ENCODE measurements at regions of chr15 and their contacts with region 1.

Region 1: GRCh38 chr15:65862682-65863081 is 6.6 kb upstream of the RAB11A start:
- DNase-seq: peak; percentile 62
- H3K4me3 Mint-ChIP-seq: no peak overlapping the region
- H3K27ac Mint-ChIP-seq: no peak overlapping the region
- H3K4me1 Mint-ChIP-seq: peaks cover 7% of the 10 kb centered on the region
- H3K27me3 Mint-ChIP-seq: peaks cover 3% of the 10 kb centered on the region

Region 2: DNA sequence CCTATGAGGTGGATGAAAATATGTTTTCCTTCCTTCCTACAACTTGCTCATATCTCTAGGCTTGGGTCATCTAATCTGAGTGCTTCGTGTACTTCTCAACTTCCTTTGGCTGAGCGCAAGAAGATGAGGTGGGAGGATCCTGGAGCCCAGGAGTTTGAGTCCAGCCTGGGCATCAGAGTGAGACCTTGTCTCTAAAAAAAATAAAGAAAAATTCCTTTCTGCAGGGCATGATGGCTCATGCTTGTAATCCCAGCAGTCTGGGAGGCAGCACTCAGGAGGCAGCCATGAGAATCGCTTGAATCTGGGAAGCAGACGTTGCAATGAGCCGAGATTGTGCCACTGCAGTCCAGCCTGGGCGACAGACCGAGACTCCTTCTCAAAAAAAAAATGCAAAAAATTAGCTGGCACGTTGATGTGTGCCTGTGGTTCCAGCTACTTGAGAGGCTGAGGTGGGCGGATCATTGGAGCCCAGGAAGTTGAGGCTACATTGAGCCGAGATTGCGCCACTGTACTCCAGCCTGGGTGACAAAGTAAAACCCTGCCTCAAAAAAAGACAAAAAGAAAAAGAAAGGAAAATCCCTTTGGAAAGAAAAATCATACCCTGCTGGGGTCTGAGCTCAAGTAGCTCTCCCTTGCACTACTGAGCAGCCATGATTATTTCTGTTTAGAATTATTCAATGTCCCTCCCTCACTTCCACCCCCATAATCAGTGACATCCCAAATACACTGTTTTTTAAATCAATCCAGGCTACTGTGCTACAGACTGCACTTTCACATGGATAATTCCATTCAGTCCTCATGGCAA is 21.4 kb before region 1 on chr15:
- intact Hi-C with region 1: no loop called
- DNase-seq: no peak
- H3K4me3 Mint-ChIP-seq: no peak overlapping the region
- H3K27ac Mint-ChIP-seq: no peak overlapping the region
- H3K4me1 Mint-ChIP-seq: no peaks in the 10 kb centered on the region
- H3K27me3 Mint-ChIP-seq: peaks cover 4% of the 10 kb centered on the region

Region 3: GRCh38 chr15:65916664-65917406 is 54.2 kb after region 1 on chr15:
- intact Hi-C with region 1: loop called (anchors 1 kb)
- DNase-seq: peak; percentile 71
- H3K4me3 Mint-ChIP-seq: peak overlapping the region; percentile 37
- H3K27ac Mint-ChIP-seq: peak overlapping the region; percentile 83
- H3K4me1 Mint-ChIP-seq: peaks cover 55% of the 10 kb centered on the region
- H3K27me3 Mint-ChIP-seq: no peaks in the 10 kb centered on the region

Region 4: GRCh38 chr15:65929573-65929972 is 66.9 kb after region 1 on chr15:
- intact Hi-C with region 1: loop called (anchors 2 kb)
- DNase-seq: no peak
- H3K4me3 Mint-ChIP-seq: no peak overlapping the region
- H3K27ac Mint-ChIP-seq: no peak overlapping the region
- H3K4me1 Mint-ChIP-seq: no peaks in the 10 kb centered on the region
- H3K27me3 Mint-ChIP-seq: no peaks in the 10 kb centered on the region

Region 5: GRCh38 chr15:66193066-66193465 is 330.4 kb after region 1 on chr15:
- intact Hi-C with region 1: loop called (anchors 5 kb)
- DNase-seq: no peak
- H3K4me3 Mint-ChIP-seq: no peak overlapping the region
- H3K27ac Mint-ChIP-seq: no peak overlapping the region
- H3K4me1 Mint-ChIP-seq: no peaks in the 10 kb centered on the region
- H3K27me3 Mint-ChIP-seq: peaks cover 11% of the 10 kb centered on the region

Region 6: GRCh38 chr15:66595931-66596545 is 733.4 kb after region 1 on chr15:
- intact Hi-C with region 1: no loop called
- DNase-seq: no peak
- H3K4me3 Mint-ChIP-seq: no peak overlapping the region
- H3K27ac Mint-ChIP-seq: no peak overlapping the region
- H3K4me1 Mint-ChIP-seq: peaks cover 8% of the 10 kb centered on the region
- H3K27me3 Mint-ChIP-seq: peaks cover 2% of the 10 kb centered on the region